GM18951 (cell line): ENCODE measurements at regions of chrX and their contacts with region 1.

Region 1: DNA sequence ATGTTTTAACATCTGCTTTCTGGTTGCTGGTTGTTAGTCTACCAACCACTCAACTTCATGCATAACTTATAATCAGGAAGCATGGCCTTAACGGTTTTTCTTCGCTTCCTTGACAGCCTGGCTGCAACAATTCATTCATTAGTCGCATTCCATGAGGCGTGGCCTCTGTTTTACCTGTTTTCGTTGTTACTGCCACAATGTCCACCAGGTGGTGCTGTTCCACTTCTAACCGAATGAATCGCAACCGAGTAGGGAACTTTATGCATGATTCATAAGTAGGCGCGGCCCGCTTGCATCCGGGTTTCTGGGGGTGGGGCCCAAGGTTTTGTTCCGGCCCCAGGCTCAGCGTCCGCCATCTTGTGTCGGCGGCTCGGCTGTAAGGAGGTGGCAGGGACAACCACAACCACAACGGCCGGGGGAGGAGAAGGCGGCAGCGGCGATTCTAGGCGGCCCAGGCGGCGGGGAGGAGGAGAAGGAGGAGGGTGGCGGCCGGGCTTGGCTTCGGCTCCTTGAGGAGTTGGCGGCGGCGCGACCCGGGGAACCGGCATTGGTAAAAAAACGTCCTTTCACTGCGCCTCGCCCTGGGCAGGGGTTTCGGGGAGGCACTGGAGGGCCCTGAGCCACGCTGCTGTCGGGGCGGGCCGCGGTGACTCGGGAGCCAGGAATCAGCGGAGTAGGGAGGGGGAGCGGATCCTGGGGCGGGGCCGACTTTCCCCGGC is at the start of gene UBA1:
- POLR2A ChIP-seq: peak; percentile 90

Region 2: DNA sequence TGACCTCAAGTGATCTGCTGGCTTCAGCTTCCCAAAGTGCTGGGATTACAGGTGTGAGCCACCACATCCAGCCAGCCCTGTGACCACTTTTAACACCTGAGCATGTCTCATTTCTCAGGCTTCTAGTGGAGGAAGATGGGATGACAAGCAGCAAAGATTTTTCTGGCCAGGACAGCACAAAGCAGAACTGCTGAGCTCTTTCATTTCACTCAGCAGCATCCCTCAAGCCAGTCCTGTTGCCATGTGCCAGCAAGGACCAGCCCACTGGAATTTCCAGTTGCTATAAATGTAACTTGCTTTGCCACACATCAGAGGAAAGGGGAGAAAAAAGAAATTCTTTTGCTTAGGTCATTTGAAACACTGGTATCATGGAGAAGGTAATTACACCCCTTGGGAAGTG is 510.6 kb before region 1 on chrX:
- in situ Hi-C with region 1: no loop called
- POLR2A ChIP-seq: no peak

Region 3: DNA sequence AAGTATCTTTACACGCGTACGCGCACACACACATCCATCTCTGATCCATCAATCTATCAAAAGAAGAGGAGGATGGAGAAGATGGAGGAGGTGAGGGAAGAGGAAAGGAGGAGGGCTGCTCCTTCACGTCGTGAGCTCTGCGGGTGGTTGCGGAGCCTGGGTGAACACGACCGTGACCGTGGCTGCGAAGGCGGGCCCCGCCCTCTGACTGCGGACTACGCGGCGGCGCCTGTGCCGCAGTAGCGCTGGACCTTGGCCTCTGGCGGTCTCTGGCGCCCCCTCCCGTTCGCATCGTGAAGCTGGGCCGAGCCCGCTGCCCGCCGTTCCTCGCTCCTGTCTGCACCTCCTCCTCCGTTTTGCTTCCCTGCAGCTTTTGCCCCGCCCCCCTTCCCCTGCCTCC is 329.7 kb after region 1 on chrX:
- in situ Hi-C with region 1: loop called (anchors 25 kb)
- POLR2A ChIP-seq: no peak